ENCODE measurements at regions of chr1 and their contacts with region 1.

Region 1: GRCh38 chr1:17236779-17237560 is 11.9 kb upstream of the PADI3 start:
- DNase-seq: peak; percentile 75
- ATAC-seq: peak; percentile 65
- H3K4me3 ChIP-seq: no peak overlapping the region
- H3K27ac ChIP-seq: no peak overlapping the region
- H3K4me1 ChIP-seq: peaks cover 13% of the 10 kb centered on the region
- H3K27me3 ChIP-seq: peaks cover 18% of the 10 kb centered on the region
- CTCF ChIP-seq: peak; percentile 90
- POLR2A ChIP-seq: peak; percentile 58; the same call in 1 of the 2 replicates
- RAD21 ChIP-seq: peak; percentile 97

Region 2: DNA sequence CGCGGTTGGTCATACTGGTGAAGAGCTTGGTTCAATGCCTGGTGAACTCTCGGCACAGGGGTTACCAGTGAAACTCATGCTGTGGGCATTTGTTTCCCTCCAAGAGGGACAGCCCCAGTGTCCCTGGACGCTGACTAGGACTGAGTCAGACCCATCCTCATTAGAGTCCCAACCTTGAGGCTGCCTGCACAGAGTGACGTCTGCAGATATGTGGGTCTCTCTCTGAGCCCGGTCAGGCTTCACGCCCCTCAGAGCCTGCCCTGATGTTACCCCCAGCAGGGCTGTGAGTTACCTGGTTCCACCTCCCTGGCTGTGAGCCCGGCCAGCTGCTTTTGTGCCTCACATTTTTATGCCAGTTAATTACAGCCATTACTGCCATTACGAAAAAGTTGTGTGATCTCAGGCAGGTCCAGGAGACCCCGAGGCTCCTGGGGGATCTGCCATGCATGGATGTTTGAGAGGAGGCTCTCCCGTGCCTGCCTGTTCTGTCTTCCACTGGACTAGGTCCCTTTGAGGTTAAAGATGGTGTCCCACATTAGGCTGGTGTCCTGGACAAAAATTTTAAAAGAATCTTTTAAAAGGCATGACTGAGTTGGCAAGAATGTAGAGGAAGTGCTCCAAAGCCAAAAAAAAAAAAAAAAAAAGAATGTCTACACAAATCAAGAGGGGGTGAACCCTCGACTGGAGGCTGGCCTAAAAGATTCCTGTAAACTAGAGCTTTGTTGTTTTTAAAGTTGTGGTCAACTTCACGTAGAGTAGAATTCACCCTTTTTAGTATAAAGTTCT is 68.7 kb before region 1 on chr1:
- CTCF ChIA-PET with region 1: no interaction called
- POLR2A ChIA-PET with region 1: no interaction called
- dilution Hi-C with region 1: no loop called
- in situ Hi-C with region 1: no loop called
- intact Hi-C with region 1: loop called (anchors 1 kb)
- DNase-seq: peak; percentile 88
- ATAC-seq: peak; percentile 68
- H3K4me3 ChIP-seq: no peak overlapping the region
- H3K27ac ChIP-seq: peak overlapping the region; percentile 98
- H3K4me1 ChIP-seq: peaks cover 23% of the 10 kb centered on the region
- H3K27me3 ChIP-seq: no peaks in the 10 kb centered on the region; the same call in 1 of the 2 replicates
- CTCF ChIP-seq: no peak
- POLR2A ChIP-seq: no peak
- RAD21 ChIP-seq: no peak; the same call in none of the 2 replicates

Region 3: GRCh38 chr1:17405898-17406759 is 169.2 kb after region 1 on chr1:
- CTCF ChIA-PET with region 1: no interaction called
- POLR2A ChIA-PET with region 1: no interaction called
- dilution Hi-C with region 1: no loop called
- in situ Hi-C with region 1: no loop called
- intact Hi-C with region 1: loop called (anchors 5 kb)
- DNase-seq: peak; percentile 44
- ATAC-seq: peak; percentile 93
- H3K4me3 ChIP-seq: no peak overlapping the region
- H3K27ac ChIP-seq: no peak overlapping the region
- H3K4me1 ChIP-seq: peaks cover 2% of the 10 kb centered on the region; the same call in 1 of the 2 replicates
- H3K27me3 ChIP-seq: no peaks in the 10 kb centered on the region
- CTCF ChIP-seq: peak; percentile 67
- POLR2A ChIP-seq: no peak
- RAD21 ChIP-seq: peak; percentile 65